Naive thymus-derived CD4-positive, alpha-beta T cell (primary cell): ENCODE measurements at regions of chr19 and their contacts with region 1.

Region 1: DNA sequence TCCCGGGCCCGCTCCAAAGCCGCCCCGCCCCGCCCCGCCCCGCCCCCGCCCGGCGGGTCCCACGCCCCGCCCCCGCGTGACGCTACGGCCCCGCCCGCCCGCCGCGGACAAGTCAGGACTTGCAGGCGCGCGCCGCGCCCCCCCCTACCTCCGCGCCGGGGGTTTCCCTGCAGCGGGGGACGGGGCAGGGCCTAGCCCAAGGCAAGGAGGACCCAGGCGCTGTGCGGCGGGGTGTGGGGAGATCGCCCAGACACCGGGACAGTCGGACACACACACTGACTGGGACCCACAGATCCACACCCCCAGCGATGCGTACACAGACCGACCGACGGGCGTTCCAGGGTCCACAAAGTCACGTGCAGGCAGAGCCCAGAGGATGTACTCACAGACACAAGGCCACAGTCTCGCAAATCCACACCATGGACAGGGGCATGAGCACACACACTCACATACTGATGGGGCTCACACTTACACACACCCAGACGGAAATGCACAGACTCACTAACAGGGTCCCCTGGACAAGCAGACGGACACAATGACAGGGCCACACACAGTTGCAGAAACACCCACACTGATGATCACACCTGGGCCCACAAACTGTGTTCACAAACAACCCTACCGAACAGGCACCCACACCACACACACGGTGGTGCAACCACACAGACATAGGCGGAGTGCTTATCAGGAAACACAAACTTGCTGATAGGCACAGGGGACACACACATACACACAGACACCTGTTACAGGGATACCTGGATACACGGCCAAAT is 401 bp upstream of the BBC3 start:
- DNase-seq: peak; percentile 77 to 94 (median 86)
- ATAC-seq: peak; percentile 78
- H3K4me3 ChIP-seq: peak overlapping the region; percentile 54
- H3K4me3 Mint-ChIP-seq: peak overlapping the region in 9 of 10 donors; percentile 69 to 88 (median 81)
- H3K27ac ChIP-seq: peak overlapping the region; percentile 80
- H3K27ac Mint-ChIP-seq: peak overlapping the region; percentile 20 to 92 (median 90)
- H3K4me1 ChIP-seq: peaks cover 36 to 45% of the 10 kb centered on the region in 2 donors
- H3K4me1 Mint-ChIP-seq: peaks cover 20 to 29% (median 24%) of the 10 kb centered on the region in 7 donors
- H3K27me3 ChIP-seq: no peaks in the 10 kb centered on the region
- H3K27me3 Mint-ChIP-seq: peaks cover 0 to 4% (median 0%) of the 10 kb centered on the region in 5 donors

Region 2: GRCh38 chr19:46600384-46601317 is 630.7 kb before region 1 on chr19:
- CTCF ChIA-PET with region 1: no interaction called
- POLR2A ChIA-PET with region 1: no interaction called
- intact Hi-C with region 1: no loop called
- DNase-seq: peak; percentile 96 to 99 (median 98)
- ATAC-seq: peak; percentile 91
- H3K4me3 ChIP-seq: peak overlapping the region; percentile 69
- H3K4me3 Mint-ChIP-seq: peak overlapping the region; percentile 95 to 100 (median 98)
- H3K27ac ChIP-seq: peak overlapping the region; percentile 99
- H3K27ac Mint-ChIP-seq: peak overlapping the region; percentile 100
- H3K4me1 ChIP-seq: peaks cover 15 to 30% of the 10 kb centered on the region in 2 donors
- H3K4me1 Mint-ChIP-seq: peaks cover 27 to 57% (median 46%) of the 10 kb centered on the region in 7 donors
- H3K27me3 ChIP-seq: no peaks in the 10 kb centered on the region
- H3K27me3 Mint-ChIP-seq: peaks cover 0 to 10% (median 0%) of the 10 kb centered on the region in 5 donors

Region 3: GRCh38 chr19:47256688-47257443 is 25.5 kb after region 1 on chr19:
- CTCF ChIA-PET with region 1: interaction called, 3 read pairs
- POLR2A ChIA-PET with region 1: interaction called, 7 read pairs
- intact Hi-C with region 1: loop called (anchors 1 kb)
- DNase-seq: peak; percentile 94 to 100 (median 96)
- ATAC-seq: peak; percentile 88
- H3K4me3 ChIP-seq: peak overlapping the region; percentile 65
- H3K4me3 Mint-ChIP-seq: peak overlapping the region; percentile 85 to 97 (median 90)
- H3K27ac ChIP-seq: peak overlapping the region; percentile 90
- H3K27ac Mint-ChIP-seq: peak overlapping the region; percentile 90 to 99 (median 97)
- H3K4me1 ChIP-seq: peaks cover 15 to 24% of the 10 kb centered on the region in 2 donors
- H3K4me1 Mint-ChIP-seq: peaks cover 35 to 46% (median 39%) of the 10 kb centered on the region in 7 donors
- H3K27me3 ChIP-seq: no peaks in the 10 kb centered on the region
- H3K27me3 Mint-ChIP-seq: peaks cover 0 to 2% (median 0%) of the 10 kb centered on the region in 5 donors

Region 4: DNA sequence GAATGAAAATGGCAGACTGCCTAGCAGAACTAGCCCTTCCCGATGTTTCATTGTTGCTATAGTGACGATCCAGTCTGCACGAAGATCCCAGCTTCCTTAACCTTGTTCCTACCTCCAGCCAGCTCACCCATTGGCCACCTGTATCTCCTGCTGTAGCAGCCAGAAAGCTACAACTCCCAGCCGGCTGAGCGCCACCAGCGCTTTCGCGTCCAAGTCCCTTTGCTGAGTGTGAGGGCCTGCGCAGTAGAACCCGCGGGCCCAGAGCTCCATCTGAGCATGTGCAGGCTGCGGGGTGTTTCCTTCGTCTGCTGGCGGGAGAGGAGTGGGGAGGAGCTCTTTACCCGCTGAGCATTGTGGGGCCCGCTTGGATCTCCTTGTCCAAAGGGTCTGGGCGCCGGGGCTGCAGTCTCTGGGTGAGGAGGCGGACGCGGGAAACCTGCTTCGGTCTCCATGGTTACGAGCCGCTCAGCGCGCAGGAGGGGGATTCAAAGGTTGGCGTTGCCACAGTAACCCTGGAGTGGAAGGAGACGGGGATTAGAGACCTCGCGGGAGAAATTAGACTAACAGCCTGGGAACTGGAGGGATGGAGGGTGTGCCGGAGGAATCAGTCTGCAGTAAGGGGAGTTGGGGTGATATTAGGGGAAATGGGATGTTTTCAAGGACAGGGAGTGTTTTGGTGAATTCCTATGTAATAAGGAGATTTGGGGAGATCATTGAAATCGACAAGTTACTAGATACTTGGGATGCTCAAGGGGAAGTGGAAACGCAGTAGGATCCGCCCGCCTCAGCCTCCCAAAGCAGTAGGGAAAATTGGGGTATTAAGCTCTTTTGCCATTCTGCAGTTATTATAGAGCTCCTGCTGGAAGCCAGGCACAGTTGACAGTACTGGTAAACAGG is 972.6 kb after region 1 on chr19:
- CTCF ChIA-PET with region 1: no interaction called
- POLR2A ChIA-PET with region 1: no interaction called
- intact Hi-C with region 1: no loop called
- DNase-seq: peak; percentile 73 to 90 (median 89)
- ATAC-seq: peak; percentile 100
- H3K4me3 ChIP-seq: peak overlapping the region; percentile 73
- H3K4me3 Mint-ChIP-seq: no peak overlapping the region
- H3K27ac ChIP-seq: peak overlapping the region; percentile 81
- H3K27ac Mint-ChIP-seq: no peak overlapping the region
- H3K4me1 ChIP-seq: peaks cover 8 to 19% of the 10 kb centered on the region in 2 donors
- H3K4me1 Mint-ChIP-seq: peaks cover 4 to 34% (median 18%) of the 10 kb centered on the region in 7 donors
- H3K27me3 ChIP-seq: no peaks in the 10 kb centered on the region
- H3K27me3 Mint-ChIP-seq: no peaks in the 10 kb centered on the region